Common myeloid progenitor, CD34-positive (primary cell): ENCODE measurements at regions of chr7 and their contacts with region 1.

Region 1: GRCh38 chr7:41716691-41717090 is 13.8 kb upstream of the INHBA start:
- DNase-seq: no peak
- H3K4me3 ChIP-seq: no peak overlapping the region
- H3K27ac ChIP-seq: no peak overlapping the region
- H3K4me1 ChIP-seq: peaks cover 0 to 12% (median 2%) of the 10 kb centered on the region in 4 experiments
- H3K27me3 ChIP-seq: no peaks in the 10 kb centered on the region

Region 2: GRCh38 chr7:41705109-41705901 is 11.4 kb before region 1 on chr7:
- CTCF ChIA-PET with region 1: interaction called, 19 read pairs
- POLR2A ChIA-PET with region 1: no interaction called
- DNase-seq: peak; percentile 86 to 92 (median 92)
- H3K4me3 ChIP-seq: peak overlapping the region; percentile 21 to 89 (median 72)
- H3K27ac ChIP-seq: no peak overlapping the region
- H3K4me1 ChIP-seq: peaks cover 15 to 44% (median 28%) of the 10 kb centered on the region in 4 experiments
- H3K27me3 ChIP-seq: peaks cover 0 to 3% (median 0%) of the 10 kb centered on the region in 5 experiments